Colonic mucosa (tissue), 4 donors: ENCODE measurements at regions of chr18 and their contacts with region 1.

Region 1: GRCh38 chr18:48230467-48231113 is 178.6 kb downstream of the ZBTB7C start:
- DNase-seq: peak; percentile 79
- H3K4me3 ChIP-seq: no peak overlapping the region
- H3K27ac ChIP-seq: no peak overlapping the region
- H3K4me1 ChIP-seq: no peaks in the 10 kb centered on the region
- H3K27me3 ChIP-seq: no peaks in the 10 kb centered on the region
- CTCF ChIP-seq: peak; percentile 61

Region 2: GRCh38 chr18:48345596-48345995 is 115.0 kb after region 1 on chr18:
- intact Hi-C with region 1: loop called (anchors 5 kb)
- DNase-seq: peak; percentile 41
- H3K4me3 ChIP-seq: no peak overlapping the region
- H3K27ac ChIP-seq: no peak overlapping the region
- H3K4me1 ChIP-seq: no peaks in the 10 kb centered on the region
- H3K27me3 ChIP-seq: no peaks in the 10 kb centered on the region
- CTCF ChIP-seq: peak; percentile 27

Region 3: DNA sequence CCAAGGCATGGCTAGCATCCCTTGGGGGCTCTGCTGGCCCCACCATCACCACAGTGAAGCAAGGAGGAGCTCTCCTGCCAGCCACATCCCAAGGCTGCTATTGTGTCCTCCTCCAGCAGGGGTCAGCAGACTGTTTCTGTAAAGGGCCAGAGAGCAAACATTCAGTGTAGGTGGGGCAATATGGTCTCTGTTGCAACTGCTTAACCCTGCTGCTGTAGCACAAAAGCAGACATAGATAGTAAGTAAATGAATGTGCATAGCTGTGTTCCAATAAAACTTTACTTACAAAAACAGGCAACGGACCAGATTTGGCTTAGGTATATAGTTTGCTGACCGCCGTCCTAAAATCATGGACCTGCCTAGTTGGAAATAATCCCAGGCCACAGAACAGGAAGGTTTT is 214.9 kb after region 1 on chr18:
- intact Hi-C with region 1: loop called (anchors 5 kb)
- DNase-seq: peak; percentile 87
- H3K4me3 ChIP-seq: no peak overlapping the region
- H3K27ac ChIP-seq: no peak overlapping the region
- H3K4me1 ChIP-seq: no peaks in the 10 kb centered on the region
- H3K27me3 ChIP-seq: no peaks in the 10 kb centered on the region
- CTCF ChIP-seq: peak; percentile 90

Region 4: DNA sequence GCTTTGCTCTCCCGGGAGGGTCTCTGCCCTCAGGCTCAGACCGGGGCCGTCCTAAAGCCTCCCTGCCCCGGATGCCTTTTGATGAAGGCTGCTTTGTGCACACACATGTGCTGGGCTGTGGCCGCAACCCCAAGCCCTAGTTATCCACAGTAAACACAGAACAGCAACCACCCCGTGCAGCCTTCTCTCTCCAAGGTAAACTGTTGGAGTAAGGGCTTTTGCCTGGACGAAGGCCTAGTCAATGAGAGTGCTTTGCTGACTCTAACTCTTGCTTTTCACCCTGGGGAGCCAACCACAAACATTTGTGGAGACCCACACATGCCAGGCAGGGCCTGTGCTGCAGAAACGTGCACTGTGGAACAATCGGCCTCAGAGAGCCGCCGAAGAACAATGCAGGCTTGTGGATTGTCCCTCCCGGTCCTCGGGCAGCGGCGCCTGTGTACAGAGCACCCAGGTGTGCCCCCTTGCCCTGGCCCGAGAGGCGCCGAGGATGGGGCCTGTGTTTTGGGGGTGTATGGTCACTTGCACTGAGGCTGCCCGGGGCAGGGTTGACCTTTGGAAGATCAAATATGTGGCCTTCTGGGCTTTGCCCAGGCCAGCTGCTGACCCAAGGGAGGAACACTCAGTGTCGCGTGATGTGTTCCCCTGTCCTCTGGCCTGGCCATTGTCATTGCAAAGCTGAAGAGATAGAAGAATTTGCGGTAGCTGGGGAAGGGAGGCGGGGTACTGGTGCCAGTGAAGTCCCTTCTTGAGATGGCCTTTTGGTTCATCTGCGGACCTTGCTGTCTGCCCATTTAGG is 345.3 kb after region 1 on chr18:
- intact Hi-C with region 1: no loop called
- DNase-seq: no peak
- H3K4me3 ChIP-seq: no peak overlapping the region
- H3K27ac ChIP-seq: no peak overlapping the region
- H3K4me1 ChIP-seq: no peaks in the 10 kb centered on the region
- H3K27me3 ChIP-seq: no peaks in the 10 kb centered on the region
- CTCF ChIP-seq: no peak

Region 5: GRCh38 chr18:48820483-48821250 is 590.1 kb after region 1 on chr18:
- intact Hi-C with region 1: no loop called
- DNase-seq: no peak
- H3K4me3 ChIP-seq: no peak overlapping the region
- H3K27ac ChIP-seq: no peak overlapping the region
- H3K4me1 ChIP-seq: peaks cover 5% of the 10 kb centered on the region
- H3K27me3 ChIP-seq: no peaks in the 10 kb centered on the region
- CTCF ChIP-seq: no peak